ENCODE measurements at regions of chr22 and their contacts with region 1.

Region 1: GRCh38 chr22:32474635-32475467 is at the start of gene FBXO7:
- DNase-seq: peak; percentile 96
- H3K4me3 ChIP-seq: peak within 1 kb of the TSS; percentile 96
- H3K27ac ChIP-seq: peak within 1 kb of the TSS; percentile 94
- H3K4me1 ChIP-seq: peaks cover 18% of the 10 kb centered on the region
- H3K27me3 ChIP-seq: no peaks in the 10 kb centered on the region
- CTCF ChIP-seq: peak; percentile 53
- total RNA-seq, gene FBXO7: 89.0 and 95.2 TPM in 2 replicates

Region 2: GRCh38 chr22:31661851-31662656 is 812.8 kb before region 1 on chr22 and contains the start of gene PISD:
- CTCF ChIA-PET with region 1: no interaction called
- POLR2A ChIA-PET with region 1: no interaction called
- intact Hi-C with region 1: loop called (anchors 10 kb)
- DNase-seq: peak; percentile 97
- H3K4me3 ChIP-seq: peak within 1 kb of the TSS; percentile 76
- H3K27ac ChIP-seq: peak within 1 kb of the TSS; percentile 75
- H3K4me1 ChIP-seq: peaks cover 5% of the 10 kb centered on the region
- H3K27me3 ChIP-seq: no peaks in the 10 kb centered on the region
- CTCF ChIP-seq: no peak
- total RNA-seq, gene PISD: 39.0 and 40.8 TPM in 2 replicates

Region 3: DNA sequence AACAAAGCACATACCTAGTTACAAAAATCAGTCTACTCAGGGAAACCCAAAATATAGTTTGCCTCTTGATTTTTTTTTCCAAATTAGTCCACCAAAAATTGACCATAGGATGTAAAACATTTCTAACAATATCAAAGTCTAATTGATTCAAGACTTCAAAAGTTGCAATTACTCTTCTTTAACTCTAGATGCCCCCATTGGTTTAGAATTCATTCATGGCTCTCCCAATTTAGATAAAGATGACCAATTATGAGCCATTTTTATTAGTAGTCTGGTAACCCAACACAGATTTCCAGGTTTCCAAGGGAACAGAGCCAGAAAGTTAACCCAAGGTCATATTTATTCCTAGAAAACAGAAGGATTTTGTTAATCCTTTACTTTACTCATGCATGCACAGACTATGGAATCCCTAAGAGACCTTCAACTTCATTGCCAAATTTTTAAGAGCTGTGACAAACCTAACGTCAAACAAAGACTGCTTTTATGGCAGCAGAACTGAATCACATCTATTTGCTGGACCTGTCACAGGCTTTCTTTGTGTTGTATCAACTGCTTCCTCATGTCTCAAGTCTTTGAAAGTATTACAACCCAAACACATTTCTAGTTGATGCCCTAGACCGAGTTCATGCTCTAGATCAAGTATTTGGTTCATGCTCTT is 371.1 kb before region 1 on chr22:
- CTCF ChIA-PET with region 1: no interaction called
- POLR2A ChIA-PET with region 1: no interaction called
- intact Hi-C with region 1: loop called (anchors 5 kb)
- DNase-seq: peak; percentile 12
- H3K4me3 ChIP-seq: no peak overlapping the region
- H3K27ac ChIP-seq: no peak overlapping the region
- H3K4me1 ChIP-seq: no peaks in the 10 kb centered on the region
- H3K27me3 ChIP-seq: peaks cover 32% of the 10 kb centered on the region
- CTCF ChIP-seq: peak; percentile 47

Region 4: DNA sequence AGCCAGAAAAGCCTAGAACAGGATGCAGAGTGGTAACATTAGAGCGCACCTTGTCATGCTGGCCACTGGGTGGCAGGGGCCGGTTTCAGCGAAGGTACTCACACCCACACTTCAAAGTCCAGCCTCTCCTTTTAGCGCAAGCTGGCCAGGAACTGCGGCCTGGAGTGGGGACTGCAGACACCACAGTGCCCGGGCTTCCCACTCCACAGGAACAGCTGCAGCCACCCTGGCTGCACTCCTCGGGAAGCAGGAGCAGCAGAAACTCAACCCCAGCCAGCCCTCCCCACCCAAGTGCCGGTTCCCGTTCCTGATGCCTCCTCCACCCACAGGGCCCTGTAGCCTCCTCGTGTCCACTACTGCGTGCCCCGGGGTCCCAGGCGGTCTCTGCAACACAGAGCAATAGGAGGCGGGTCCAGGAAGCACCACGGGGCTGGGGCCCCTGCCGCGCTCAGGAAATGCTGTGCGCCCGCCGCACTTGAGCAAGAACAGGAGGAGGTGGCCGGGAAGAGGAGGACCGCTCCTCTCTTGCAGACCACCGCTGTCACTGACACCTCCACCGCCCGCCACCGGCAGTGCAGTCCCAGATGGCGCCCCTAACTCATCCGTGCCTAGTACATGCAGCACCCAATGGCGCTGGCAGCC is 272.2 kb before region 1 on chr22:
- CTCF ChIA-PET with region 1: interaction called, 11 read pairs
- POLR2A ChIA-PET with region 1: interaction called, 3 read pairs
- intact Hi-C with region 1: loop called (anchors 5 kb)
- DNase-seq: peak; percentile 48
- H3K4me3 ChIP-seq: peak overlapping the region; percentile 46
- H3K27ac ChIP-seq: no peak overlapping the region
- H3K4me1 ChIP-seq: peaks cover 4% of the 10 kb centered on the region
- H3K27me3 ChIP-seq: peaks cover 18% of the 10 kb centered on the region
- CTCF ChIP-seq: peak; percentile 64

Region 5: GRCh38 chr22:32411829-32412592 is 62.8 kb before region 1 on chr22 and contains the start of gene RTCB:
- CTCF ChIA-PET with region 1: no interaction called
- POLR2A ChIA-PET with region 1: no interaction called
- intact Hi-C with region 1: loop called (anchors 2 kb)
- DNase-seq: peak; percentile 93
- H3K4me3 ChIP-seq: peak within 1 kb of the TSS; percentile 95
- H3K27ac ChIP-seq: peak within 1 kb of the TSS; percentile 83
- H3K4me1 ChIP-seq: peaks cover 15% of the 10 kb centered on the region
- H3K27me3 ChIP-seq: no peaks in the 10 kb centered on the region
- CTCF ChIP-seq: no peak
- total RNA-seq, gene RTCB: 122 and 123 TPM in 2 replicates

Region 6: GRCh38 chr22:33139937-33140336 is 665.1 kb after region 1 on chr22:
- CTCF ChIA-PET with region 1: no interaction called
- POLR2A ChIA-PET with region 1: no interaction called
- intact Hi-C with region 1: no loop called
- DNase-seq: no peak
- H3K4me3 ChIP-seq: no peak overlapping the region
- H3K27ac ChIP-seq: no peak overlapping the region
- H3K4me1 ChIP-seq: no peaks in the 10 kb centered on the region
- H3K27me3 ChIP-seq: no peaks in the 10 kb centered on the region
- CTCF ChIP-seq: no peak

Measured in A673 (cell line).